G401 (cell line): ENCODE measurements at regions of chr15 and their contacts with region 1.

Region 1: DNA sequence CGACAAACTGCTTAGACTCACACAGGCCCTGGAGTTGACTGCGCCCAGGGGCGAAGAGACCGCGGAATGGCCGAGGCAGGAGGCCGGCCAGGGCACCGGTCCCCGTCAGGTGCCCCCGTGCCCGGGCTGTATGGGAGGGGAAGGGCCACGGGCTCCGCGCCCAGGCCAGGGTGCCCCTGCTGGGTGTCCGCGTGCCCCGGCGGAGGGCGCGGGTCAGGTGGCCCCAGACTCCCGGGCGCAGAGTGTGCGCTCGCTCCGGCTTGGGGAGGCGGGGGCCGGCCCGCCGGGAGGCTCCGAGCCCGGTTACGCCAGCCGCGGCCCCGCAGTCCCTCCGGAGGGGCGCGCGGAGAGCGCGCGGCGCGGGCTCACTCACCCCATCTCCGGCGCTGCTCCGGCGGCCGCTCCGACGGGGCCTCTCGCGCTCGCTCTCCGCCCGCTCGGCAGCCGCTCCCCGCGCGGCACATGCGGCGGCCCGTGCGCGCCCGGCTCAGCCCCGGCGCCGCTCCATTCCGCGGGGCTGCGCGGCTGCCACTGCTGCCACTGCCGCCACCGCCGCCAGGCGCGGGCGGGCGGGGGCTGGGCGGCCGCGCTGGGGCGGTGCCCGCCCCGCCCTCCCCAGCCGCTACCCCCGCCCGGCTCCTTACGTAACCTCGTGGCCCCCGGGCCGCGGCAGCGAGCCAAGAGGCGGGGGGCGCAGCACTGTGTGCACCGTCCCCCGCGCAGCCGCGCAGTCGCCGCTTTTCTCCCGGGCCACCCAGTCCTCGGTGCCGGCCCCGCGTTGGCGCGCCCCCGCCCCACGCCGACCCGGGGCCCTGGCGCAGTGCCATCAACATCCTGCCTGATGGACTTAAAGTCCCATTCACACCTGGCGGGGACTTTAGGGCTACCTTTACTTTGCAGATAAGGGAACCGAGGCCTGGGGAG is at the start of gene HOMER2:
- DNase-seq: peak; percentile 30
- total RNA-seq, gene HOMER2: 36.0 and 40.4 TPM in 2 replicates

Region 2: GRCh38 chr15:82985688-82986441 is 33.4 kb after region 1 on chr15 and contains the start of gene RAMAC:
- in situ Hi-C with region 1: loop called (anchors 5 kb)
- DNase-seq: peak; percentile 97
- total RNA-seq, gene RAMAC: 26.8 and 38.9 TPM in 2 replicates

Region 3: GRCh38 chr15:83014205-83014653 is 61.8 kb after region 1 on chr15:
- in situ Hi-C with region 1: no loop called
- DNase-seq: no peak

Region 4: DNA sequence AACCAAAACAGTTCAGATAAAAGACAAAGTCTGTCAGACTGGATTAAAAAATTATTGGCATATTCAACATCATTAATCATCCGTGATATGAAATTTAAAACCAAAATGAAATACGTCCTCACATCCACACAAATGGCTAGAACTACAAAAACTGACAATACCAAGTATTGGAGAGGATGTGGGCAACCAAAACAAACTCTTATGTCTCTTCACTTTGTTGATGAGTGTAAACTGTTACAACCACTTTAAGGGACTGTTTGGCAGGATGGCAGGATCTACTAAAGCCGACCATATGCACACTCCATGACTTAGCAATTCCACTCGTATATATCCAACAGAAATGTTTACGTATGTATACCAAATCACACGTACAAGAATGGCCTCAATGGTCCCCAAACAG is 83.8 kb after region 1 on chr15:
- in situ Hi-C with region 1: no loop called
- DNase-seq: no peak